ENCODE measurements at regions of chr12 and their contacts with region 1.

Region 1: DNA sequence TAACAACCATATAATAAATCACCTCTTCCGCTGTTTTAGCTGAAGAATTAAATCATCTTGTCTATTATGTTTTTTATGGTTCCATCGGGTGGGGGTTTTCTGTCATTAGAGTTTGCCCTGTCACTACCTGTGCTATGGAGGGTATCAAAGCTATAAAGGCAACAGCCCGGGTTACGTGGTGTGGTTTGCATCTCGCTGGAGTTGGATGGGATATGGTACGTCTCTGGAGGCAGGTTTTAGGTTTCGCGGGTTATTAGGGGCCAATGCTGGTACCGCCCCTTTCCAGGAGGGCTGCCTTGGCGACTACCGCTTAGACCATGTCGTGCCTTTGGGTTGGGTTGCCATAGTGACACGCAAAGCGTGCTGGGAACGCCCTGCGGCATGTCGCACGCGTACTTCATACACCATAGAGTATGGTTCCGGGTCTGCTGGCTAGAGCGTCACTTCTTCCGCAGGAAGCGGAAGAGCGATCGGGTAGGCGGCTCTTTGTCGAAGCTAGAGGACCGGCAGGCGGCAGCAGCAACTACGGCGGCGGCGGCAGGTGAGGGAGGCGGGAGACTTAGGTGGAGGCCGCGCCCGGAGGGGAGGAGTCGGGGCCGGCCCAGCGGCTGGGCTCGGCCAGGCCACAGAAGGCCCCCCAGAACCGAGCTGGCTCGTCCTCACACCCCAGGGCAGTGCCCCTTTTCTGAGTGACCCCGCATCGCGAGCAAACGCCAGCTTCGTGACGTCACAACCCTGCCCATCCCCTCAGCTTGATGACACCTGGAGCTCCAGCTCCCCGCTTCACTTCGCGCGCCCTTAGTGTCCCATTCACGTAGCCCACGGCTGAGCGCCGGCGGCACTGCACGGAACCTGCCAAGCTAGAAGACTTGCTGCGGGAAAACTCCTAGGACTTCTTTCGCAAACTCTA is at the start of gene ZC3H10:
- DNase-seq: peak; percentile 89 to 100 (median 94)
- ATAC-seq: peak; percentile 67
- H3K4me3 ChIP-seq: peak within 1 kb of the TSS; percentile 73
- H3K4me3 Mint-ChIP-seq: peak within 1 kb of the TSS; percentile 97
- H3K27ac ChIP-seq: peak within 1 kb of the TSS; percentile 75 to 90
- H3K27ac Mint-ChIP-seq: peak within 1 kb of the TSS; percentile 94
- H3K4me1 ChIP-seq: peaks cover 35% of the 10 kb centered on the region
- H3K4me1 Mint-ChIP-seq: peaks cover 33% of the 10 kb centered on the region
- H3K27me3 ChIP-seq: no peaks in the 10 kb centered on the region
- H3K27me3 Mint-ChIP-seq: no peaks in the 10 kb centered on the region
- CTCF ChIP-seq: peak; percentile 52
- total RNA-seq, gene ZC3H10: 6.3 to 8.9 TPM

Region 2: GRCh38 chr12:55973598-55974307 is 144.3 kb before region 1 on chr12 and contains the start of gene RAB5B:
- CTCF ChIA-PET with region 1: no interaction called
- POLR2A ChIA-PET with region 1: interaction called, 25 read pairs
- intact Hi-C with region 1: no loop called
- DNase-seq: peak; percentile 92 to 100 (median 96)
- ATAC-seq: peak; percentile 86
- H3K4me3 ChIP-seq: peak within 1 kb of the TSS; percentile 74
- H3K4me3 Mint-ChIP-seq: no peak within 1 kb of the TSS
- H3K27ac ChIP-seq: peak within 1 kb of the TSS; percentile 82 to 86
- H3K27ac Mint-ChIP-seq: no peak within 1 kb of the TSS
- H3K4me1 ChIP-seq: peaks cover 26% of the 10 kb centered on the region
- H3K4me1 Mint-ChIP-seq: peaks cover 18% of the 10 kb centered on the region
- H3K27me3 ChIP-seq: no peaks in the 10 kb centered on the region
- H3K27me3 Mint-ChIP-seq: no peaks in the 10 kb centered on the region
- CTCF ChIP-seq: no peak
- total RNA-seq, gene RAB5B: 21.6 to 27.4 TPM

Region 3: DNA sequence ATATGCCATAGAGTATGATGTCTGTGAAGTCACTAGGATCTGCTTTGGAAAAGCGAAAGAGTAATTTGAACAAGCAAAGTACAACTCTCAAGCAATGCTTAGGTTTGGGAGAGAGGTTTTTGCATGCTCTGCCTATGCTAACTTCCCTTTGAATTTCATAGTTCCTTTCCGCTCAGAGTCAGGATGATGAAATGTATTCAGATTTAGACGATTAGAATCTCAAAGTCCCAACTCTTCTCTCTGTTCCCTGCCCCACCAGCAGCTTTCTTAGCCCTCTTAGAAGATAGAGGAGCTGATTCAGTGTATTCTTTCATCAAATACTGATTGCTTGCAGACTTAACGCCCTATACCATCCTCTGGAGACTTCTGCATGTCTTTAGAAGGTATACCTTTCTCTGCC is 132.7 kb before region 1 on chr12:
- CTCF ChIA-PET with region 1: no interaction called
- POLR2A ChIA-PET with region 1: no interaction called
- intact Hi-C with region 1: no loop called
- DNase-seq: no peak
- ATAC-seq: no peak
- H3K4me3 ChIP-seq: no peak overlapping the region
- H3K4me3 Mint-ChIP-seq: no peak overlapping the region
- H3K27ac ChIP-seq: no peak overlapping the region
- H3K27ac Mint-ChIP-seq: no peak overlapping the region
- H3K4me1 ChIP-seq: no peaks in the 10 kb centered on the region
- H3K4me1 Mint-ChIP-seq: peaks cover 11% of the 10 kb centered on the region
- H3K27me3 ChIP-seq: no peaks in the 10 kb centered on the region
- H3K27me3 Mint-ChIP-seq: no peaks in the 10 kb centered on the region
- CTCF ChIP-seq: no peak

Region 4: DNA sequence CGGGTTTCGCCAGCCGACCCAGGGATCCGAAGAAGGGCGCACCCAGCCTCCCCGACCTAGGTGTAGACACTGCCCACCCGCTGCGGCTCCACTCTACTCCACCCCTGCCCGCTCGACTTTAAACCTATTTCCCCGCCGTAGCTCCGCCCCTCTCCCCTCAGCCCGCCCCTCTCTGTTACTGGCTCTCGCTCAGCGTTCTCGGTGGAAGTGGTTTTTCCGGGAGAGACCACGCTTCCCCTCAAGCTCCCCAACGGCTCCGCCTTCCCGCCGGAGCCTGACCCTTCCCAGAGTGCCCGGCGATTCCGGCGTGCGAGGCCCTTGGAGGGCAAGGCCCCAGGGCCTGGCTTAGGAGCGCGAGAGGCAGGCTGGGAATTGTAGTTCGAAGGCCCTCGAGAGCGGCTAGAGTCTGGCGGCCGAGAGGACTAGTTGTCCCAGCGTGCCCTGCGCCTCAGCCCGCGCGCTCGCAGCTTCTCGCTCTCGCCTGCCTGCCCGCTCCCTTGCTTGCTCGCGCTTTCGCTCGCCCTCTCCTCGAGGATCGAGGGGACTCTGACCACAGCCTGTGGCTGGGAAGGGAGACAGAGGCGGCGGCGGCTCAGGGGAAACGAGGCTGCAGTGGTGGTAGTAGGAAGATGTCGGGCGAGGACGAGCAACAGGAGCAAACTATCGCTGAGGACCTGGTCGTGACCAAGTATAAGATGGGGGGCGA is 13.8 kb before region 1 on chr12 and contains the start of gene PA2G4:
- CTCF ChIA-PET with region 1: interaction called, 25 read pairs
- POLR2A ChIA-PET with region 1: interaction called, 233 read pairs
- intact Hi-C with region 1: loop called (anchors 1 kb)
- DNase-seq: peak; percentile 89 to 99 (median 96)
- ATAC-seq: peak; percentile 88
- H3K4me3 ChIP-seq: peak within 1 kb of the TSS; percentile 90
- H3K4me3 Mint-ChIP-seq: peak within 1 kb of the TSS; percentile 93
- H3K27ac ChIP-seq: peak within 1 kb of the TSS; percentile 63 to 95
- H3K27ac Mint-ChIP-seq: peak within 1 kb of the TSS; percentile 100
- H3K4me1 ChIP-seq: peaks cover 48% of the 10 kb centered on the region
- H3K4me1 Mint-ChIP-seq: peaks cover 67% of the 10 kb centered on the region
- H3K27me3 ChIP-seq: no peaks in the 10 kb centered on the region
- H3K27me3 Mint-ChIP-seq: no peaks in the 10 kb centered on the region
- CTCF ChIP-seq: no peak
- total RNA-seq, gene PA2G4: 51.0 to 61.0 TPM

Region 5: GRCh38 chr12:56172831-56173230 is 54.8 kb after region 1 on chr12:
- CTCF ChIA-PET with region 1: no interaction called
- POLR2A ChIA-PET with region 1: no interaction called
- intact Hi-C with region 1: no loop called
- DNase-seq: no peak
- ATAC-seq: no peak
- H3K4me3 ChIP-seq: no peak overlapping the region
- H3K4me3 Mint-ChIP-seq: no peak overlapping the region
- H3K27ac ChIP-seq: no peak overlapping the region
- H3K27ac Mint-ChIP-seq: no peak overlapping the region
- H3K4me1 ChIP-seq: no peaks in the 10 kb centered on the region
- H3K4me1 Mint-ChIP-seq: no peaks in the 10 kb centered on the region
- H3K27me3 ChIP-seq: no peaks in the 10 kb centered on the region
- H3K27me3 Mint-ChIP-seq: no peaks in the 10 kb centered on the region
- CTCF ChIP-seq: no peak

Region 6: DNA sequence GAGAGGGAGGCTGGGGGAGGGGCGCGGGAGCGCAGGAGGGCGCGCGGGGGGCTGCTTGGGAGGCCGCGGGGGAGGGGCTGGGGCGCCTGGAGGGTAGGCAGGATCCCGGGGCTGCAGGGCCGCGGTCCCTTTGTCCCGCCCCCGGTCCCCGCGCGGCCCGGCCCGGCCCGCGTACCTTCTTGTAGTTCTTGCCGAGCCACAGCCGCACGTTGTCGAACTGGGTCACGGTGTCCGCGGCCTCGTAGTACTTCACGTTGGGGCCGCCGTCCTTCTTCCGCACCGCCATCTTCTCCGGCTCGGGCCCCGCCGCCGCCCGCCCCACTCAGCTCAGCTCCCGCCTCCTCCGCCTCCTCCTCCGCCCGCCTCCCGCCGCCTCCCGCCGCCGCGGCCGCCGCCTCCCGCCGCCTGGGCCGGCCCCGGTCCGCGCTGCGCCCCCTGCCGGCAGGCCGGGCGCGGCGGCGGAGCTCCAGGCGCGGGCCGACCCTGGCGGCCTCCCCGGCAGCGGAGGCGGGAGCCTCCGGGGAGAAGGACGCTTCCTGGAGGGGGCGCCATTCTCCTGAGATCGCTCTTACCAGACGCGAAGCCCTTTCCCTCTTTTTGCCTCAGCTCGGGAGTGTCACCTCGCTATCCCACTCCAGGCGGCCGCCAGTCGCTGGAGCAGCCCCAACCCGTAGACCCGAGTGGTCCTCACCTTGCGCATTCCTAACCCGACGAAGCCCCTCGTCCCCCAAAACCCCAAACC is 71.3 kb after region 1 on chr12 and contains the start of gene SMARCC2:
- CTCF ChIA-PET with region 1: interaction called, 138 read pairs
- POLR2A ChIA-PET with region 1: interaction called, 116 read pairs
- intact Hi-C with region 1: loop called (anchors 1 to 2 kb)
- DNase-seq: peak; percentile 71 to 95 (median 80)
- ATAC-seq: peak; percentile 77
- H3K4me3 ChIP-seq: peak within 1 kb of the TSS; percentile 96
- H3K4me3 Mint-ChIP-seq: peak within 1 kb of the TSS; percentile 99
- H3K27ac ChIP-seq: peak within 1 kb of the TSS; percentile 87 to 93
- H3K27ac Mint-ChIP-seq: peak within 1 kb of the TSS; percentile 99
- H3K4me1 ChIP-seq: peaks cover 33% of the 10 kb centered on the region
- H3K4me1 Mint-ChIP-seq: peaks cover 46% of the 10 kb centered on the region
- H3K27me3 ChIP-seq: no peaks in the 10 kb centered on the region
- H3K27me3 Mint-ChIP-seq: peaks cover 5% of the 10 kb centered on the region
- CTCF ChIP-seq: peak; percentile 64
- total RNA-seq, gene SMARCC2: 104 to 109 TPM

Region 7: GRCh38 chr12:56315622-56316473 is 197.8 kb after region 1 on chr12 and contains the start of gene CNPY2:
- CTCF ChIA-PET with region 1: interaction called, 5 read pairs
- POLR2A ChIA-PET with region 1: interaction called, 13 read pairs
- intact Hi-C with region 1: no loop called
- DNase-seq: peak; percentile 86 to 96 (median 90)
- ATAC-seq: peak; percentile 93
- H3K4me3 ChIP-seq: peak within 1 kb of the TSS; percentile 100
- H3K4me3 Mint-ChIP-seq: peak within 1 kb of the TSS; percentile 99
- H3K27ac ChIP-seq: peak within 1 kb of the TSS; percentile 84 to 98
- H3K27ac Mint-ChIP-seq: peak within 1 kb of the TSS; percentile 98
- H3K4me1 ChIP-seq: peaks cover 17% of the 10 kb centered on the region
- H3K4me1 Mint-ChIP-seq: peaks cover 19% of the 10 kb centered on the region
- H3K27me3 ChIP-seq: no peaks in the 10 kb centered on the region
- H3K27me3 Mint-ChIP-seq: no peaks in the 10 kb centered on the region
- CTCF ChIP-seq: no peak
- total RNA-seq, gene CNPY2: 30.5 to 33.4 TPM